ENCODE measurements at regions of chr5 and their contacts with region 1.

Region 1: DNA sequence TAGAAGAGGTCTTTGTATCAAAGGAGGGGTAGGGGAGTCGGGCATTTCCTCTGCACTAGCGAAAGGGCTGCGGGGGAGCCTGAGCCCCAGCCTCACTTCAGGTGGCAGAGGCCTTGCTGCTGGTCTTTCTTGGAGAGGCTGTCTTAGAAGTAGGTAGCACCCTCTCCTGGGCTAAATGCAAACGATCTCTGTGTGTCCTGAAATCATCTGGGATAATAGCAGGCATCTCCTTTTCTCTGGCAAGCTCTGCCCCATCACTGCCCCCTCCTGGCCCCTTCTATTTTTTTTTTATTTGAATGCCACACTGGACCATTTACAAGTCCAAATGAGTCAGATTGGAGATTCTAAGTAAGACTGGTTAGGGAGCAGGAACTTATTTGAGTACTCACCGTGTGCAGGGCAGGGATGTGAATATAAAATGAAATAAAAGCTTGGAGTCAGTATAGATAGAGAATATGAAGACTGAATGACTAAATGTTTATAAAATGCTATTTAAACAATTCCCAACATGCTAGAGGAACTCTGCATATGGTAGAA is 137.1 kb downstream of the FGF1 start:
- DNase-seq: peak; percentile 45
- H3K4me3 Mint-ChIP-seq: no peak overlapping the region
- H3K27ac Mint-ChIP-seq: no peak overlapping the region
- H3K4me1 Mint-ChIP-seq: peaks cover 18% of the 10 kb centered on the region
- H3K27me3 Mint-ChIP-seq: peaks cover 8% of the 10 kb centered on the region

Region 2: DNA sequence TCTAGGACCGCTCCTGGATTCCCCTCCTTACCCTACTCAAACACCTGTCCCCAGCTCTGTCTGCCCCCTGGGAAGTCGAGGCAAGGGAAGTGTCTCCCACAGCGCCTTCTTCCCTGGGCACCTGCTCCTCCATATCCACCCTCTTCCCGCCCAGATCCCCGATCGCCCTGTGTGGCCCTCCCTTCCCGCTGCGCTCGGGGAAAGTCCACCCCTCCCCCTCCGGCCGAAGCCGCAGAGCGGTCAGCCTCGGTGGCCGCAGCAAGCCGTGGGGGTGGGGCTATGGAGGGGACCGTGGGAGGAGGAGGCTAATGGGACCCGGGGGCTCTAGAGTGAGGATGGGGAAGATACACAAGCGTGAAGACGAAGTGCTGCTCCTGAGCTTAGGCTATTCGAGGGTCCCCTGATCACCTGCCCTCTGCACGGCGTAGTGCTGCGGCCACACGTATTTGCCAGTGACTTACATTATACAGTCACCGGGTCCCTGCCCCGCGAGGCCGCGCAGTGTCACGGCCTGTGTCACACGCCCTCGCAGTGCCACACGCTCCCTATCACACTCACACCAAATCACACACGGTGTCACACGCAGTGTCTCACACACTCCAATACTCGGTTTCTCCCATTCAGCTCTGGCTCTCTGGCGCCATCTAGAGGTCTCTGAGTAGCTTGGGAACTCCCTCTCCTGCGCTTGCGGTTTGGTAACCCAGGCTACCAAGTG is 669.9 kb before region 1 on chr5:
- CTCF ChIA-PET with region 1: no interaction called
- POLR2A ChIA-PET with region 1: no interaction called
- intact Hi-C with region 1: no loop called
- DNase-seq: peak; percentile 92
- H3K4me3 Mint-ChIP-seq: peak overlapping the region; percentile 59
- H3K27ac Mint-ChIP-seq: no peak overlapping the region
- H3K4me1 Mint-ChIP-seq: peaks cover 22% of the 10 kb centered on the region
- H3K27me3 Mint-ChIP-seq: peaks cover 73% of the 10 kb centered on the region

Region 3: DNA sequence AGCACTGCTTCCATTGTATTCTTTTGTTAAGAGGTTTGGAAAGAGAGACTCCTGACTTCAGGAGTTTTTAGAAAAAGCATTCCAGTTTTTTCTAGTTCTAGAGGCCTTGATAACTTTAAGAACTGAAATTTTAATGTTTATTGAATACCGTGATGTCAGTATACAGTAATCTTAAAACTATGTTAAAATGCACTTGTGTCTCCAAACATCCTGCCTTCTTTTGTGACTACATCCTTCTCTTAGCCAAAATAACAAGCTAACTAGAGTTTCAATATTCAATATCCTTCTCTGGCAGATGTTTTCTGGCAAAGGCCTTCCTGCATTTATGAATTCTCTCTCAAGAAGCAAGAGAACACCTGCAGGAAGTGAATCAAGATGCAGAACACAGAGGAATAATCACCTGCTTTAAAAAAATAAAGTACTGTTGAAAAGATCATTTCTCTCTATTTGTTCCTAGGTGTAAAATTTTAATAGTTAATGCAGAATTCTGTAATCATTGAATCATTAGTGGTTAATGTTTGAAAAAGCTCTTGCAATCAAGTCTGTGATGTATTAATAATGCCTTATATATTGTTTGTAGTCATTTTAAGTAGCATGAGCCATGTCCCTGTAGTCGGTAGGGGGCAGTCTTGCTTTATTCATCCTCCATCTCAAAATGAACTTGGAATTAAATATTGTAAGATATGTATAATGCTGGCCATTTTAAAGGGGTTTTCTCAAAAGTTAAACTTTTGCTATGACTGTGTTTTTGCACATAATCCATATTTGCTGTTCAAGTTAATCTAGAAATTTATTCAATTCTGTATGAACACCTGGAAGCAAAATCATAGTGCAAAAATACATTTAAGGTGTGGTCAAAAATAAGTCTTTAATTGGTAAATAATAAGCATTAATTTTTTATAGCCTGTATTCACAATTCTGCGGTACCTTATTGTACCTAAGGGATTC is 397.1 kb before region 1 on chr5:
- CTCF ChIA-PET with region 1: interaction called, 9 read pairs
- POLR2A ChIA-PET with region 1: no interaction called
- intact Hi-C with region 1: loop called (anchors 1 kb)
- DNase-seq: peak; percentile 56
- H3K4me3 Mint-ChIP-seq: no peak overlapping the region
- H3K27ac Mint-ChIP-seq: no peak overlapping the region
- H3K4me1 Mint-ChIP-seq: peaks cover 7% of the 10 kb centered on the region
- H3K27me3 Mint-ChIP-seq: no peaks in the 10 kb centered on the region

Region 4: DNA sequence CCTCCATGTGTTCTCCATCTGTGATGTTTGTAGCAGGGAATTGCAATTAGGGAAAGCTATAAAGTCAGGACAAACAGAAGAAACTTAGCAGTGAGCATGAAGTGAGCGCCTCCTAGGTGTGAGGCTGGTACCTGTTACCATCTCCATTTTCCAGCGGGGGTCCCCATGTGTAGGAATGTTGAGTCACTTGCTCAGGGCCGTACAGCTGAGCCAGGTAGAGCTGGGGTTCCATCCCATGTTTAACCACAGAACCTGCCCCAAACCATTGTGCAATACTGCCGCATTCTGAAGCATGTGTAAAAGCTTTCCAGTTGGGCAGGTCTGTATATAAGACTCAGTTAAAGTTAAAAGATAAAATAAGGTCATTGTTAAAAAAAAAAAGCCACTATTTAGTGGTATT is 377.5 kb before region 1 on chr5:
- CTCF ChIA-PET with region 1: interaction called, 4 read pairs
- POLR2A ChIA-PET with region 1: no interaction called
- intact Hi-C with region 1: loop called (anchors 5 kb)
- DNase-seq: no peak
- H3K4me3 Mint-ChIP-seq: no peak overlapping the region
- H3K27ac Mint-ChIP-seq: no peak overlapping the region
- H3K4me1 Mint-ChIP-seq: no peaks in the 10 kb centered on the region
- H3K27me3 Mint-ChIP-seq: peaks cover 2% of the 10 kb centered on the region

Region 5: GRCh38 chr5:142324871-142325724 is 223.7 kb before region 1 on chr5 and contains the start of gene SPRY4:
- CTCF ChIA-PET with region 1: interaction called, 14 read pairs
- POLR2A ChIA-PET with region 1: no interaction called
- intact Hi-C with region 1: loop called (anchors 5 kb)
- DNase-seq: peak; percentile 94
- H3K4me3 Mint-ChIP-seq: peak within 1 kb of the TSS; percentile 78
- H3K27ac Mint-ChIP-seq: no peak within 1 kb of the TSS
- H3K4me1 Mint-ChIP-seq: peaks cover 26% of the 10 kb centered on the region
- H3K27me3 Mint-ChIP-seq: peaks cover 48% of the 10 kb centered on the region
- total RNA-seq, gene SPRY4: 1.1 to 1.2 TPM

Region 6: DNA sequence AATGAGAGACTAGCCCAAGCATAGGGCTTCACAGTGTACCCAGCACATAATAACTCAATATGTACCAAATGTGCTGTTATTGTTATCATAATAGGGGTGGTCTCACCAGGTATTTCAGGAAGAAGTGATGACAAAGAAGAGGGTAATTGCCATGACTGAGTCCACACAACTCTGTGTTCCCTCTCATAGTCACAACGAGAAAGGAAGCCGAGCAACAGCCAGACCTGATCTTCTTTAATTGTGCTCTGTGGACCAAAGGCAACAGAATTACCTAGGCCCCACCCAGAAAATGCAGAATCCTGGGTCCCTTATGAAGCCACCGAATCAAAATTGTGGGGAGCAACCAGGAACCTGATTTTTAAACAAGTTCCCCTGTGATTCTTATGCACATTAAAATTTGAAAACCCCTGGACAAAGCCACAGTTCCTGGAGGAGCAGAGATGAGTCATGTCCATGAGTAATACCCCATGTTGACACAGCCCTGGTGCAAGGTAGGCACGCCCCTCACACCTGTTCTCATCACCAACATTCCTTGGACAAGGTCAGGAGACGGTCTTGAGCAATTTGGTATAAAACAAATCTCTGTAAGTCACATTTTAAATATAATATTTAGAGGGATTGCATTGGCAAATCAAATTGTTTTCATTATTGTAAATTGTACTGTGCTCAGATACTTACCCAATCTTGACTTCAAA is 131.9 kb after region 1 on chr5:
- CTCF ChIA-PET with region 1: no interaction called
- POLR2A ChIA-PET with region 1: no interaction called
- intact Hi-C with region 1: no loop called
- DNase-seq: no peak
- H3K4me3 Mint-ChIP-seq: no peak overlapping the region
- H3K27ac Mint-ChIP-seq: no peak overlapping the region
- H3K4me1 Mint-ChIP-seq: no peaks in the 10 kb centered on the region
- H3K27me3 Mint-ChIP-seq: no peaks in the 10 kb centered on the region